ENCODE measurements at regions of chr3 and their contacts with region 1.

Region 1: GRCh38 chr3:144282313-144282712 is 310.7 kb downstream of the DIPK2A start:
- DNase-seq: no peak
- H3K4me3 ChIP-seq: no peak overlapping the region
- H3K27ac ChIP-seq: no peak overlapping the region
- H3K4me1 ChIP-seq: no peaks in the 10 kb centered on the region
- H3K27me3 ChIP-seq: no peaks in the 10 kb centered on the region
- CTCF ChIP-seq: no peak
- POLR2A ChIP-seq: no peak

Region 2: GRCh38 chr3:144114767-144115166 is 167.5 kb before region 1 on chr3:
- intact Hi-C with region 1: loop called (anchors 5 kb)
- DNase-seq: no peak
- H3K4me3 ChIP-seq: no peak overlapping the region
- H3K27ac ChIP-seq: no peak overlapping the region
- H3K4me1 ChIP-seq: peaks cover 0 to 4% of the 10 kb centered on the region in 2 donors
- H3K27me3 ChIP-seq: no peaks in the 10 kb centered on the region
- CTCF ChIP-seq: no peak
- POLR2A ChIP-seq: no peak

Measured in breast epithelium (tissue), 4 donors.